Activated CD4-positive, alpha-beta T cell treated with anti-CD3 and anti-CD28 coated beads for 36 hours (primary cell): ENCODE measurements at regions of chr16 and their contacts with region 1.

Region 1: GRCh38 chr16:11356573-11357331 is 11.5 kb downstream of the RMI2 start:
- DNase-seq: peak; percentile 79
- ATAC-seq: no peak
- H3K4me3 Mint-ChIP-seq: peak overlapping the region; percentile 46
- H3K27ac Mint-ChIP-seq: peak overlapping the region; percentile 23
- H3K4me1 Mint-ChIP-seq: peaks cover 67% of the 10 kb centered on the region
- H3K27me3 Mint-ChIP-seq: peaks cover 7% of the 10 kb centered on the region

Region 2: GRCh38 chr16:10871149-10871991 is 485.4 kb before region 1 on chr16:
- CTCF ChIA-PET with region 1: no interaction called
- POLR2A ChIA-PET with region 1: no interaction called
- intact Hi-C with region 1: no loop called
- DNase-seq: peak; percentile 87
- ATAC-seq: peak; percentile 92
- H3K4me3 Mint-ChIP-seq: peak overlapping the region; percentile 7
- H3K27ac Mint-ChIP-seq: peak overlapping the region; percentile 71
- H3K4me1 Mint-ChIP-seq: peaks cover 51% of the 10 kb centered on the region
- H3K27me3 Mint-ChIP-seq: peaks cover 43% of the 10 kb centered on the region

Region 3: DNA sequence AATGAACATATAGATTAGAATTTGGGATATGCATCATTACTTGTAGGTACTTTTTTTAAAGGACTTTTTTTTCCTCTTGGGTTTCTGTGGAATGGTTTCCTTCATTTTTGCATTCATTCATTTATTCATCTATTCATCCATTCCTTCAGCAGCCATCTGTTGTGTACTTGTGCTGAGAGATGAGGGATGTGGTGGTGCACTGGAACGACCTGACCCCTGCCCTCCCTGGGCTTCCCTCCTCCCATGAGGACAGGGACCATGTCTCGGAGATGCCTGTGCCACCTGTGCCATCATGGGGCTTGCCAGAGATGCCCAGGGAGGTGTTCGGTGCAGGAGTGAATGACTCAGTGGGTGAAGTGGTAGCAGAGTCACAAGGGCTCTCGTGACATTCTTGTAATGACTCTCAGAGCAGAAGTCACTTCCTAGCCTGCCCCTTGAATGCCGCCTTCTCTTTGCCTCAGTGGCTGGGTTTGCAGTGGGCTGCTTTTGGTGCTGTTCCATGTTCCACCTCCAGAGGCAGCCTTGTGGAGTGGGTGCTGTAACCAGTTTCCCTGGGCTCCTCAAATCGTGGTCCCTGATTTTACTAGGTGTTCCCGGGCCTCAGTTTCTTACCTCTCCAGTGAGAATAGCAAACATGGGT is 368.5 kb before region 1 on chr16:
- CTCF ChIA-PET with region 1: no interaction called
- POLR2A ChIA-PET with region 1: no interaction called
- intact Hi-C with region 1: loop called (anchors 1 kb)
- DNase-seq: peak; percentile 91
- ATAC-seq: peak; percentile 88
- H3K4me3 Mint-ChIP-seq: peak overlapping the region; percentile 46
- H3K27ac Mint-ChIP-seq: peak overlapping the region; percentile 92
- H3K4me1 Mint-ChIP-seq: peaks cover 89% of the 10 kb centered on the region
- H3K27me3 Mint-ChIP-seq: no peaks in the 10 kb centered on the region

Region 4: DNA sequence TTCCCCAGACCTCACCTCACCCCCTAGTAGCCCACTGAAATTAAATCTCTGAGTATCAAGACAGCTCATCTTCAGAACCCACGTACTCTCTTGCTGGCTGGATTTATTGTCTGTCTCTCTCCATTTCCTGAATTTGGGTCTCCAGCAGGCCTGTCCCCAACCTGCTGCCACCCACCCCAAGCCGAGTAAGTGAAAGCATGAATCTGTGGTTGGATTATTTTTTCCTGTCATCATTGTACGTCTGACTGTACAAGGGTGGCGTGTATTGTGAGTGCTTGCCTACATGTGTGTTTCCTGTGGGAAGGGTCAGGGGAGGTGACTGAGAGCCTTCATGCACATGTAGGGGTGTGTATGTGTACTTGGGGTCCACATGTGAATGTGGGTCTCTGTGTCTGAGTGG is 93.0 kb before region 1 on chr16:
- CTCF ChIA-PET with region 1: interaction called, 11 read pairs
- POLR2A ChIA-PET with region 1: no interaction called
- intact Hi-C with region 1: loop called in 1 of 2 experiments (anchors 1 kb)
- DNase-seq: peak; percentile 81
- ATAC-seq: peak; percentile 90
- H3K4me3 Mint-ChIP-seq: peak overlapping the region; percentile 19
- H3K27ac Mint-ChIP-seq: peak overlapping the region; percentile 90
- H3K4me1 Mint-ChIP-seq: peaks cover 37% of the 10 kb centered on the region
- H3K27me3 Mint-ChIP-seq: no peaks in the 10 kb centered on the region

Region 5: GRCh38 chr16:11312718-11313492 is 43.8 kb before region 1 on chr16:
- CTCF ChIA-PET with region 1: no interaction called
- POLR2A ChIA-PET with region 1: no interaction called
- intact Hi-C with region 1: loop called (anchors 1 to 5 kb)
- DNase-seq: peak; percentile 47
- ATAC-seq: peak; percentile 24
- H3K4me3 Mint-ChIP-seq: no peak overlapping the region
- H3K27ac Mint-ChIP-seq: peak overlapping the region; percentile 43
- H3K4me1 Mint-ChIP-seq: peaks cover 38% of the 10 kb centered on the region
- H3K27me3 Mint-ChIP-seq: no peaks in the 10 kb centered on the region

Region 6: DNA sequence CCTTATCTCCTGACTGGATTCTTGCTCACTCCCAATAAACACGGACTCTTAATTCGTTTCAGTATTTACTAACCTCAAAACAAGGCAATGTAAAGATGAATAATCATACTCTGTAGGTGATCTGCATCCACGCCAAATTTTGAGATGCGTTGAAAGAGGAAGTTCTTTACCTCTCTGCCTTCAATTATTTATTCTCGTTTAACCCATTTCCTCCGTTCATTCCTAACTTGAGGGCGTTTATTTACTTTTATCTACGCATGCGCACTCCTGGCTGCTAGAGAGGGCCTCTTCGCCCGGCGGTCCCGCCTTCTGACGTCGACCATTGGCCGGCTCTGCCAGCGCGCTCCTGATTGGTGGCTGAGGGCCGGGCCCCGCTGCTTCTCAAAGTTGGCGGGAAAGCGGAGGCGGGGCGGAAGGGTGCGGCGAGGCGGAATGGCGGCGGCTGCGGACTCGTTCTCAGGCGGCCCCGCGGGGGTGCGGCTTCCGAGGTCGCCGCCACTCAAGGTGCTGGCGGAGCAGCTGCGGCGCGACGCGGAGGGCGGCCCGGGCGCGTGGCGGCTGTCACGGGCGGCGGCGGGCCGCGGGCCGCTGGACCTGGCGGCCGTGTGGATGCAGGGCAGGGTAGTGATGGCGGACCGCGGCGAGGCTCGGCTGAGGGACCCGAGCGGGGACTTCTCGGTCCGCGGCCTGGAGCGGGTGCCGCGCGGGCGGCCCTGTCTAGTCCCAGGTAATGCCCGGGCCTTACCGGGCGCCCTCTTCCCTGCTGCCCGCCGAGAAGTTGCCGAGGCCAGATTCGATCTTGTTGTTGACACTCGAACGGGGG is 11.5 kb before region 1 on chr16 and contains the start of gene RMI2:
- CTCF ChIA-PET with region 1: interaction called, 3 read pairs
- POLR2A ChIA-PET with region 1: interaction called, 8 read pairs
- intact Hi-C with region 1: loop called (anchors 1 kb)
- DNase-seq: peak; percentile 99
- ATAC-seq: peak; percentile 96
- H3K4me3 Mint-ChIP-seq: peak within 1 kb of the TSS; percentile 90
- H3K27ac Mint-ChIP-seq: peak within 1 kb of the TSS; percentile 94
- H3K4me1 Mint-ChIP-seq: peaks cover 49% of the 10 kb centered on the region
- H3K27me3 Mint-ChIP-seq: no peaks in the 10 kb centered on the region
- total RNA-seq, gene RMI2: 56.0 to 69.8 TPM